Caco-2 (cell line): ENCODE measurements at regions of chr4 and their contacts with region 1.

Region 1: GRCh38 chr4:87235020-87235671 is 14.7 kb upstream of the KLHL8 start:
- DNase-seq: no peak
- H3K4me3 ChIP-seq: peak overlapping the region; percentile 40
- H3K4me3 Mint-ChIP-seq: peak overlapping the region; percentile 70
- H3K27ac Mint-ChIP-seq: peak overlapping the region; percentile 22
- H3K4me1 ChIP-seq: peaks cover 10% of the 10 kb centered on the region; the same call in 1 of the 2 replicates
- H3K4me1 Mint-ChIP-seq: peaks cover 17% of the 10 kb centered on the region
- H3K27me3 ChIP-seq: no peaks in the 10 kb centered on the region
- H3K27me3 Mint-ChIP-seq: no peaks in the 10 kb centered on the region
- CTCF ChIP-seq: no peak

Region 2: DNA sequence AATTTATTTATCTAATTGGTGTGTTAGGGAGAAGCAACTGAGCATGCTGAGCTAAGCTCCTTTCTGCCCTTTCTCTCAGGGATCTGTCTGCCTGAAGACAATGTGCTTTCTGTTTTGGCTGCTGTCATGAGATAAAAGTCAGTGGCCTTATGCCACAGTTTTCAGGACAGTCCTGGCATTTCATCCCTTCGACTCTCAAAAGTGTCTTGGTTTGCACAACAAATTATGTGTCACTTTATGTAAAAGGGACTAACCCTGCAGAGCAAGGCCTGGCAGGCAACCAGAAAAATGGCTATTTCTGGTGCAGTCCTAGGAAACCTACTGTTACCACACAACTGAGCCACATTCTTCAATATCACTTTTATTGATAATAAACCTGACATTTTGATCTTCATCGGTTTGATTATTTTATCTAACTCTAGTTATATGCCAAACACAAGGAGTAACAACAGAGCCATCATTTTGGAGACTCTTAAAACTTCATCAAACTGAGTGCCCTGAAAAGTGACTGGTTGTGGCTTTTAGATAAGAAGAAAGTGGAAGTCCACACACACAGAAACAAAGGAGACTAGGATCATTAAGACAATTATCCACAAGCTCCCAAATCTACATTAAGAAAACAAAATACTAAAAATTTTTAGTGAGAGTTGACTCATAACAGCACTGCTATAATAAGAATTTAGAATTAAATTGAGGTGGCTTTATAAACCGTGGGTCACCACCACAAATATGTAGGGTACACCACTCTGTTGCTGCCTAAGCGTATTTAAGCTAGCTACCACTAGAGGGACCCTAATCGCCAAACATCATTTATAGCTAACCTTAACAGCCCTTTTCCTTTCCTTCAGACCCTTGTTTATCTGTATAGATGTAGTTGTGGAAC is 736.9 kb before region 1 on chr4:
- CTCF ChIA-PET with region 1: no interaction called
- POLR2A ChIA-PET with region 1: no interaction called
- intact Hi-C with region 1: loop called (anchors 10 kb)
- DNase-seq: peak in 1 of 2 experiments; percentile 35
- H3K4me3 ChIP-seq: no peak overlapping the region
- H3K4me3 Mint-ChIP-seq: no peak overlapping the region
- H3K27ac Mint-ChIP-seq: no peak overlapping the region
- H3K4me1 ChIP-seq: peaks cover 5% of the 10 kb centered on the region; the same call in 1 of the 2 replicates
- H3K4me1 Mint-ChIP-seq: peaks cover 7% of the 10 kb centered on the region
- H3K27me3 ChIP-seq: no peaks in the 10 kb centered on the region
- H3K27me3 Mint-ChIP-seq: no peaks in the 10 kb centered on the region
- CTCF ChIP-seq: peak; percentile 71 to 75

Region 3: DNA sequence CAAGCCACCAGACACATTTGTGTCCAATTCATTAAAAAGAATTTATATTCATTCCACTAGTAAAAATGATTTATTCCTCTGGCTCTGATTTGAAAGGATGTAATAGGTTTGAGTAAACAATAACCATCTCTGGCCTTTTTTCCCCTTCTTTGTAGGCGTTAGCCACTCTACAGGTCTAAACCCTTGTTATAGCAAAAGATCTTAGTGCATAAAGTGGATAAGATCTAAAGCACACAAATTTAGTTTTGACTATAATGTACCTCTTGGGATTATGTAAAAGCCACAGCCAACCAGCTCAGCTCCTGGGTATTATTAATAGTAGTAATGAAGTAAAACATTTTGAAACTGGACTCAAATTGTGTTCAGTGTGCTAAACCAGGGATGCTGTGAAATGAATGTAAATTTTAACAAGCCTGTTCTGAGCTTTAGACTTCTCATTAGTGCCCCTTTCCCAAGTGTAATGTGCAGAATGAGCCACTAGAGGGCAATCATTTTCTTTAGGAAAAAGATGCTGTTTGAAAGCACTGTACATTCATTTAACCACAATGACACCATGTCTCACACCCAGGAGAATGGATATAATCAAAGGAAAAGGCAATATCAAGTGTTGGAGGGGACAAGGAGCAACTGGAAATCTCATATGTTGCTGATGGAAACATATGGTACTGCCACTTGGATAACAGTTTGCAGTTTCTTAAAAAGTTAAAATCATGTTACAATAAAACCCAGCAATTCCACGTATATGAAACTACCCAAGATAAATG is 84.5 kb before region 1 on chr4:
- CTCF ChIA-PET with region 1: interaction called, 20 read pairs
- POLR2A ChIA-PET with region 1: no interaction called
- intact Hi-C with region 1: loop called (anchors 1 kb)
- DNase-seq: peak; percentile 42 to 75
- H3K4me3 ChIP-seq: no peak overlapping the region
- H3K4me3 Mint-ChIP-seq: peak overlapping the region; percentile 19
- H3K27ac Mint-ChIP-seq: peak overlapping the region; percentile 21
- H3K4me1 ChIP-seq: peaks cover 8% of the 10 kb centered on the region
- H3K4me1 Mint-ChIP-seq: peaks cover 31% of the 10 kb centered on the region
- H3K27me3 ChIP-seq: no peaks in the 10 kb centered on the region
- H3K27me3 Mint-ChIP-seq: no peaks in the 10 kb centered on the region
- CTCF ChIP-seq: peak; percentile 78 to 88

Region 4: DNA sequence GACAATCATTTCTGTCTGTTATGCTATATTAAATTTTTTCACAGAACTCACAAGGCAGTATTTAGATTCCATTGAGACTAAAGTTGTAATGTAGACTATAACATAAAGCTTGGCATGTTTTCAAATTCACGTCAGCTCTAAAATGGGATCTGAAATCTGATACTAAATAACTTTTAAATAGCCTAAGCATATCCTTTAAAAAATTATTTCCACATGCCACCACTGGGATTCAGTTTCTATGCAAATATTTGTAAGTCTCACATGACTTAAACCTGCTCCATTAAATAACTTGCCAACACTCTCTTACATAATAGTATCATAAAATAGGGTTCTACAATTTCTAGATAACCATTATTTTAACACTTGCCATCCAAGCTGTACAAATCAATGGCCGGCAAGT is 47.1 kb before region 1 on chr4:
- CTCF ChIA-PET with region 1: no interaction called
- POLR2A ChIA-PET with region 1: no interaction called
- intact Hi-C with region 1: loop called (anchors 2 kb)
- DNase-seq: no peak
- H3K4me3 ChIP-seq: no peak overlapping the region
- H3K4me3 Mint-ChIP-seq: no peak overlapping the region
- H3K27ac Mint-ChIP-seq: no peak overlapping the region
- H3K4me1 ChIP-seq: no peaks in the 10 kb centered on the region
- H3K4me1 Mint-ChIP-seq: peaks cover 12% of the 10 kb centered on the region
- H3K27me3 ChIP-seq: no peaks in the 10 kb centered on the region
- H3K27me3 Mint-ChIP-seq: no peaks in the 10 kb centered on the region
- CTCF ChIP-seq: no peak

Region 5: GRCh38 chr4:87220094-87220822 is 14.9 kb before region 1 on chr4 and contains the start of gene KLHL8:
- CTCF ChIA-PET with region 1: interaction called, 3 read pairs
- POLR2A ChIA-PET with region 1: no interaction called
- intact Hi-C with region 1: loop called (anchors 1 kb)
- DNase-seq: peak; percentile 87 to 94
- H3K4me3 ChIP-seq: peak within 1 kb of the TSS; percentile 94
- H3K4me3 Mint-ChIP-seq: peak within 1 kb of the TSS; percentile 94
- H3K27ac Mint-ChIP-seq: peak within 1 kb of the TSS; percentile 93
- H3K4me1 ChIP-seq: peaks cover 18% of the 10 kb centered on the region; the same call in 1 of the 2 replicates
- H3K4me1 Mint-ChIP-seq: peaks cover 30% of the 10 kb centered on the region
- H3K27me3 ChIP-seq: no peaks in the 10 kb centered on the region
- H3K27me3 Mint-ChIP-seq: no peaks in the 10 kb centered on the region
- CTCF ChIP-seq: peak in 1 of 2 experiments; percentile 33
- total RNA-seq, gene KLHL8: 23.4 and 27.7 TPM in 2 replicates

Region 6: GRCh38 chr4:87251106-87251505 is 16.0 kb after region 1 on chr4:
- CTCF ChIA-PET with region 1: no interaction called
- POLR2A ChIA-PET with region 1: no interaction called
- intact Hi-C with region 1: no loop called
- DNase-seq: no peak
- H3K4me3 ChIP-seq: no peak overlapping the region
- H3K4me3 Mint-ChIP-seq: no peak overlapping the region
- H3K27ac Mint-ChIP-seq: no peak overlapping the region
- H3K4me1 ChIP-seq: no peaks in the 10 kb centered on the region
- H3K4me1 Mint-ChIP-seq: no peaks in the 10 kb centered on the region
- H3K27me3 ChIP-seq: no peaks in the 10 kb centered on the region
- H3K27me3 Mint-ChIP-seq: no peaks in the 10 kb centered on the region
- CTCF ChIP-seq: no peak

Region 7: GRCh38 chr4:87559109-87559837 is 324.1 kb after region 1 on chr4:
- CTCF ChIA-PET with region 1: no interaction called
- POLR2A ChIA-PET with region 1: no interaction called
- intact Hi-C with region 1: no loop called
- DNase-seq: peak in 1 of 2 experiments; percentile 33
- H3K4me3 ChIP-seq: no peak overlapping the region
- H3K4me3 Mint-ChIP-seq: no peak overlapping the region
- H3K27ac Mint-ChIP-seq: no peak overlapping the region
- H3K4me1 ChIP-seq: no peaks in the 10 kb centered on the region
- H3K4me1 Mint-ChIP-seq: no peaks in the 10 kb centered on the region
- H3K27me3 ChIP-seq: no peaks in the 10 kb centered on the region
- H3K27me3 Mint-ChIP-seq: no peaks in the 10 kb centered on the region
- CTCF ChIP-seq: no peak